SK-N-SH (cell line): ENCODE measurements at regions of chr11 and their contacts with region 1.

Region 1: DNA sequence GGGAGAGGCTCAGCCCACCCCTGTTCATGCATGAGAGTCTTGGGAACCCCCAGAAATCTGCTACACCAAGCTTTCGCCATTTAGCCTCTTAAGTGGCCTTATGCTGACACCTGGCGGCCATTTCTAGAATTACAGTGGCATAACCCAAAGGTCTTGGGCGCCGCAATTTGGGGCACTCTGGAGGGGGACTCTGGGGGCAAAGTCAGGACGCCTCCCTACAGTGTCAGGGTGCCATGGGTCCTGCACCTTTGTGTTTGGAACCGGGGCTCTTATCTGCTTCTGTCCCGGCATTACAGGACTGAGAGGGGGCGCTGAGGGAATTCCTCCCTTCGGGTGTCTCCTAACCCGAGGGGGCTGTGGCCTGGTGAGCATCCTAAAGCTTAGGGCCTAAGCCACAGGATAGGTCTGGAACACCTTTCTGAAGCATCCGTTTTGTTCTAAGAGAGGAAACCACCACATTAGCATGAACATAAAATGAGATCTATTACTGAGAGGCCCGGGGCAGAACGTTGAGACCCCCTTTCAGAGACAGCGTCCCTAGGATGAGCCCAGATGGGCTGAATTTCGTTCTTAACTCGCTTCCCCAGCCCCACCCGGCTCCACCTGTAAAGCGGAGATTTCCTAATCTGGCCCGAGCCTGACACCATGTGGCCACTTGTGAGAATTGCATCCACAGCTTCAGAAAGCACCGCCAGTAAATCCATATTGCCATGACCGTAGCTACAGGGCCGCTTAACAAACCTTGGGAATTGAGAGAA is 9.3 kb downstream of the INS start:
- DNase-seq: peak; percentile 90
- H3K4me3 ChIP-seq: peak overlapping the region in 1 of 2 experiments; percentile 5; a peak in 1 of 4 replicates
- H3K27ac ChIP-seq: peak overlapping the region in 1 of 2 experiments; percentile 4; a peak in 1 of 4 replicates
- H3K4me1 ChIP-seq: peaks cover 0 to 21% of the 10 kb centered on the region in 2 experiments; a peak in 1 of 4 replicates
- H3K27me3 ChIP-seq: peaks cover 28% of the 10 kb centered on the region
- CTCF ChIP-seq: peak; percentile 70
- EP300 ChIP-seq: no peak
- RAD21 ChIP-seq: peak; percentile 85

Region 2: GRCh38 chr11:1652771-1653540 is 498.7 kb before region 1 on chr11:
- CTCF ChIA-PET with region 1: interaction called, 277 read pairs
- POLR2A ChIA-PET with region 1: interaction called, 11 read pairs
- DNase-seq: peak; percentile 96
- H3K4me3 ChIP-seq: peak overlapping the region in 1 of 2 experiments; percentile 25; a peak in 2 of 4 replicates
- H3K27ac ChIP-seq: no peak overlapping the region
- H3K4me1 ChIP-seq: peaks cover 0 to 27% of the 10 kb centered on the region in 2 experiments; a peak in 1 of 4 replicates
- H3K27me3 ChIP-seq: no peaks in the 10 kb centered on the region
- CTCF ChIP-seq: peak; percentile 95
- EP300 ChIP-seq: no peak
- RAD21 ChIP-seq: peak; percentile 93

Region 3: GRCh38 chr11:1876361-1877063 is 275.2 kb before region 1 on chr11:
- CTCF ChIA-PET with region 1: interaction called, 179 read pairs
- POLR2A ChIA-PET with region 1: no interaction called
- DNase-seq: peak; percentile 86
- H3K4me3 ChIP-seq: no peak overlapping the region; a peak in 1 of 4 replicates
- H3K27ac ChIP-seq: peak overlapping the region; percentile 28 to 78; a peak in 2 of 4 replicates
- H3K4me1 ChIP-seq: peaks cover 0 to 46% of the 10 kb centered on the region in 2 experiments; a peak in 2 of 4 replicates
- H3K27me3 ChIP-seq: no peaks in the 10 kb centered on the region
- CTCF ChIP-seq: peak; percentile 51
- EP300 ChIP-seq: no peak; a peak in 1 of 4 replicates
- RAD21 ChIP-seq: no peak

Region 4: DNA sequence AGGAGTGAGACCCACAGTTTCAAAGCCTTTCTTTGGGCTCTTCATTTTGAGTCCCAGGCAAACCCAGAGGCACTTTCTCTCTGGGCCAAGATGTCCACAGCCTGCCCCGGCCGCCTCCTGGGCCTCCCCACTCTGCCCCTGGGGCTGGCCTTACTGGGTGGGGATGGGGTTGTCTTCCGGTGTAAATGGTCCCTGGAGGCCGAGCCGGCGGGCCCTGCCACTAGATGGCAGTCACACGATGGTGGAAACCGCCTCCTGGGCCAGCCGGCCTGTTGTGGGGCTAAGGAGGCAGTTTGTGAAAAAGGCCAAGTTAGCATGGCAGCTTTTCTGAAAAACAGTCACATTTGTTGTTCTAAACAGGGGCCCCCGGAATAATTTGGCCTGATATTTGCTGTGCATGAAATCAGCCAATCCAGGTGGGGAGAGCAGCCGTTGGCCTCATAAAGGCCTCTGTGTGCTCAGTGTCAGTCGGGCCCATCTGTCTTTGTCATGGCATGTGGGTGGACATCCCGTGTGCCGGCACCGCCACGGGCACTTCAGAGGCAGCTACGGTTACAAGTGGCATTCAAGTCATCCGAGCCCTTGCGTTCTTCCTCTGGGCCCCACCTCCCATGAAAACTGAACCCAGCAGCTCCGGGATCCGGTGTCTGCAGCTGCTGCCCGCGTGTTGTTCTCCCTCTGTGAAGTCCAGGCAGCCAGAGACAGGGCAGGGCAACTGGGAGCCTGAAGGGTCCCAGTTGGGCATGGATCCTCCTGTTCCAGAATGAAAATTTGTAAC is 198.0 kb before region 1 on chr11:
- CTCF ChIA-PET with region 1: interaction called, 215 read pairs
- POLR2A ChIA-PET with region 1: interaction called, 10 read pairs
- DNase-seq: no peak
- H3K4me3 ChIP-seq: no peak overlapping the region
- H3K27ac ChIP-seq: peak overlapping the region in 1 of 2 experiments; percentile 47; a peak in 1 of 4 replicates
- H3K4me1 ChIP-seq: no peaks in the 10 kb centered on the region; a peak in 1 of 4 replicates
- H3K27me3 ChIP-seq: no peaks in the 10 kb centered on the region
- CTCF ChIP-seq: no peak
- EP300 ChIP-seq: no peak
- RAD21 ChIP-seq: no peak

Region 5: GRCh38 chr11:2036863-2037486 is 114.7 kb before region 1 on chr11:
- CTCF ChIA-PET with region 1: interaction called, 1,098 read pairs
- POLR2A ChIA-PET with region 1: interaction called, 3 read pairs
- DNase-seq: no peak
- H3K4me3 ChIP-seq: no peak overlapping the region
- H3K27ac ChIP-seq: no peak overlapping the region
- H3K4me1 ChIP-seq: no peaks in the 10 kb centered on the region
- H3K27me3 ChIP-seq: no peaks in the 10 kb centered on the region
- CTCF ChIP-seq: no peak
- EP300 ChIP-seq: no peak
- RAD21 ChIP-seq: no peak

Region 6: DNA sequence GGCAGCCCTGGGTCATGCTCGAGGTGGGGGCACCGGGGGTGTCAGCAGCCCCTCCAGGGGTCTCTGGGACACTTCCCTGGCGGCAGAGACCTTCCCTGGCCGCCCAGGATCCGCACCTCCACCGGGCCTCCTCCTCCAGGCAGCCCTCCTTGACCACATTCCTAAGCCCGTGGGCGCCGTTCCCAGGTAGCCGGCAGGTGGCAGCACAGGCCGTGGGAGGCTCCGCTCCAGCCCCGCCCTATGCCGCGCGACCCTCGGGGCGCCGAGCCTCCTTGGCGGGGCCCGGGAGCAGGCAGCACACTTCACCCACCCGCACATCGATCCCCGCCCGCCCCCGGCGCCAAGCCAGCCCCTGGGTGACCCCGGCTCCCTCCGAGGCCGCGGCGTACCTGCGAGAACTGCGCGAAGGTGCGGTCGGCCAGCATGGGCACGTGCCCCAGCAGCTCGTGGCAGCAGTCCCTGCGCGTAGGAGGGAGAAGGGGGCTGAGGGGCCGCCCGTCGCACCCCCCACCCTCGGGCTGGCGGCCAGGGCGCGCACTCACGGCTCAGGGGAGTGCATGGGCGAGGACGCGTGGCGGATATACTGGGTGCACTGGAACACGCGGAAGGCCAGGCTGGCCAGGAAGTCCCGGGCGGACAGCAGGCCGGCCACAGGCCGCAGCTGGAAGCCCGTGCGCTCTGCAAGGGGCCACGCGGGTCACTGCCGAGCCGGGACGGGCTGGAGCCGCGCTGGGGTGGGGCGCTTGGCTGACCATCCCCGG is 14.6 kb after region 1 on chr11:
- CTCF ChIA-PET with region 1: interaction called, 253 read pairs
- POLR2A ChIA-PET with region 1: no interaction called
- DNase-seq: no peak
- H3K4me3 ChIP-seq: no peak overlapping the region
- H3K27ac ChIP-seq: no peak overlapping the region
- H3K4me1 ChIP-seq: peaks cover 0 to 44% of the 10 kb centered on the region in 2 experiments; a peak in 1 of 4 replicates
- H3K27me3 ChIP-seq: no peaks in the 10 kb centered on the region
- CTCF ChIP-seq: no peak
- EP300 ChIP-seq: no peak
- RAD21 ChIP-seq: no peak

Region 7: GRCh38 chr11:2330696-2331095 is 179.0 kb after region 1 on chr11:
- CTCF ChIA-PET with region 1: no interaction called
- POLR2A ChIA-PET with region 1: no interaction called
- DNase-seq: no peak
- H3K4me3 ChIP-seq: no peak overlapping the region
- H3K27ac ChIP-seq: no peak overlapping the region
- H3K4me1 ChIP-seq: no peaks in the 10 kb centered on the region
- H3K27me3 ChIP-seq: no peaks in the 10 kb centered on the region
- CTCF ChIP-seq: no peak
- EP300 ChIP-seq: no peak
- RAD21 ChIP-seq: no peak